ENCODE measurements at regions of chr7 and their contacts with region 1.

Region 1: GRCh38 chr7:1503816-1504775 is at the start of gene INTS1:
- DNase-seq: peak; percentile 82 to 93 (median 88)
- ATAC-seq: peak; percentile 96
- H3K4me3 ChIP-seq: peak within 1 kb of the TSS; percentile 77
- H3K4me3 Mint-ChIP-seq: peak within 1 kb of the TSS; percentile 80 to 94 (median 87)
- H3K27ac ChIP-seq: peak within 1 kb of the TSS; percentile 77
- H3K27ac Mint-ChIP-seq: peak within 1 kb of the TSS in 8 of 9 donors; percentile 59 to 88 (median 77)
- H3K4me1 ChIP-seq: peaks cover 18 to 35% of the 10 kb centered on the region in 2 donors
- H3K4me1 Mint-ChIP-seq: peaks cover 35 to 60% (median 42%) of the 10 kb centered on the region in 7 donors
- H3K27me3 ChIP-seq: no peaks in the 10 kb centered on the region
- H3K27me3 Mint-ChIP-seq: peaks cover 0 to 4% (median 0%) of the 10 kb centered on the region in 5 donors
- total RNA-seq, gene INTS1: 82.0 to 157 (median 111) TPM

Region 2: DNA sequence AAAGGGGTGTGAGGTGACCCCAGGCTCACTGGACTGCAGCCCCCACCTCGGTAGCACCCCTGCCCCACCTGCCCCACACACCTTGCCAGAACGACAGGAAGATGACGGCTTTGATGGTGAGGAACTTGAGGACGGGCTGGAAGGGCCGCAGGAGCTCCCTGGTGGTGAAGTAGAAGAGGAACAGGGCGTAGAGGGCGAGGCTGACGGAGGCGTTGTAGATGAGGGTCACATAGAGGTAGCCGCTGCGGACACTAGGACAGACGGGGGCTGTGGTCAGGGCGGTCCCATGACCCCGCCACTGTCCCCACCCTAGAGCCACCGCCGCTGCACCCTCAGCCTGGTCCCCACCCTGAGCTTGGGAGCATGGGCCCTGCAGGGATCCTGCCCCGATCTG is 44.3 kb after region 1 on chr7:
- CTCF ChIA-PET with region 1: no interaction called
- POLR2A ChIA-PET with region 1: no interaction called
- intact Hi-C with region 1: loop called in 1 of 2 experiments (anchors 1 kb)
- DNase-seq: no peak
- ATAC-seq: peak; percentile 26
- H3K4me3 ChIP-seq: no peak overlapping the region
- H3K4me3 Mint-ChIP-seq: no peak overlapping the region
- H3K27ac ChIP-seq: no peak overlapping the region
- H3K27ac Mint-ChIP-seq: peak overlapping the region in 2 of 9 donors; percentile 38 to 47
- H3K4me1 ChIP-seq: no peaks in the 10 kb centered on the region
- H3K4me1 Mint-ChIP-seq: peaks cover 0 to 8% (median 4%) of the 10 kb centered on the region in 7 donors
- H3K27me3 ChIP-seq: no peaks in the 10 kb centered on the region
- H3K27me3 Mint-ChIP-seq: no peaks in the 10 kb centered on the region

Region 3: DNA sequence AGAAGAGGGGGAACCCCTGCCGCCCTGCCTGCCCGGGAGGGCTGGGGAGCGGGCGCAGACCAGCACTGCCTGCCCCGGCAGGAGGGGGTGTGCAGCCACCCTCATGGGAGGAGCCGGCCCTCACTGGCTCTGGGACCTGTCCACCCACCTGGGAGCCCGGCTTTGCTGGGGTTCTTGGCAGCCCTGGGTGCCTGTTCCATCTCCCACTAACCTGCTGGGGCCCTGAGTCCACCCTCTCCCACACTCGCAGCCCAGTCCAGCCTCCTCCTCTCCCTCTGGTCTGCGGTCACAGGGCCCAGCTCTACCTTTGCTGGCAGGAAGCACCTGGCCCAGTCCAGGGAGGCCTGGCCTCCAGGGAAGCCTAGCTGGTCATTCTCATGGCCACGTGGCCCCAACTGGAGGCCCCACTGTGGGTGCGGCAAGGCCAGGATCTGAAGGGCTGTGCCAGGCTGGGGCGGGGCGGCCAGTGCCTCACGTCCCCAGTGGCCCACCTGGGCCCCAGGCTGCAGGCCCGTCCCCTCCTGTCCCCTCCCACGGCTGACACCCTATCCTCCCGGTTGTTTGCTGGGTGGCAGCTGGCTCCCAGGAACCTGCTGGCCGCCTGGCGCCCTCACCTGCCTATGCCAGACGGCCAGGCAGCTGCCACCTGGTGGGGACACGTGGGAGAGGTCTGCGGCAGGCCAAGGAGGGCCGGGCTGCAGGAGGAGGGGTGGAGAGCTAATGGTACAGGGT is 51.9 kb after region 1 on chr7 and contains the start of gene TMEM184A:
- CTCF ChIA-PET with region 1: interaction called, 8 read pairs
- POLR2A ChIA-PET with region 1: no interaction called
- intact Hi-C with region 1: loop called in 1 of 2 experiments (anchors 1 kb)
- DNase-seq: peak in 7 of 9 donors; percentile 48 to 67 (median 57)
- ATAC-seq: peak; percentile 70
- H3K4me3 ChIP-seq: no peak within 1 kb of the TSS
- H3K4me3 Mint-ChIP-seq: peak within 1 kb of the TSS in 1 of 10 donors; percentile 34
- H3K27ac ChIP-seq: no peak within 1 kb of the TSS
- H3K27ac Mint-ChIP-seq: peak within 1 kb of the TSS in 1 of 9 donors; percentile 56
- H3K4me1 ChIP-seq: no peaks in the 10 kb centered on the region
- H3K4me1 Mint-ChIP-seq: peaks cover 0 to 4% (median 0%) of the 10 kb centered on the region in 7 donors
- H3K27me3 ChIP-seq: no peaks in the 10 kb centered on the region
- H3K27me3 Mint-ChIP-seq: no peaks in the 10 kb centered on the region
- total RNA-seq, gene TMEM184A: 0.05 TPM in 1 of 5 experiments, not detected in the others

Region 4: DNA sequence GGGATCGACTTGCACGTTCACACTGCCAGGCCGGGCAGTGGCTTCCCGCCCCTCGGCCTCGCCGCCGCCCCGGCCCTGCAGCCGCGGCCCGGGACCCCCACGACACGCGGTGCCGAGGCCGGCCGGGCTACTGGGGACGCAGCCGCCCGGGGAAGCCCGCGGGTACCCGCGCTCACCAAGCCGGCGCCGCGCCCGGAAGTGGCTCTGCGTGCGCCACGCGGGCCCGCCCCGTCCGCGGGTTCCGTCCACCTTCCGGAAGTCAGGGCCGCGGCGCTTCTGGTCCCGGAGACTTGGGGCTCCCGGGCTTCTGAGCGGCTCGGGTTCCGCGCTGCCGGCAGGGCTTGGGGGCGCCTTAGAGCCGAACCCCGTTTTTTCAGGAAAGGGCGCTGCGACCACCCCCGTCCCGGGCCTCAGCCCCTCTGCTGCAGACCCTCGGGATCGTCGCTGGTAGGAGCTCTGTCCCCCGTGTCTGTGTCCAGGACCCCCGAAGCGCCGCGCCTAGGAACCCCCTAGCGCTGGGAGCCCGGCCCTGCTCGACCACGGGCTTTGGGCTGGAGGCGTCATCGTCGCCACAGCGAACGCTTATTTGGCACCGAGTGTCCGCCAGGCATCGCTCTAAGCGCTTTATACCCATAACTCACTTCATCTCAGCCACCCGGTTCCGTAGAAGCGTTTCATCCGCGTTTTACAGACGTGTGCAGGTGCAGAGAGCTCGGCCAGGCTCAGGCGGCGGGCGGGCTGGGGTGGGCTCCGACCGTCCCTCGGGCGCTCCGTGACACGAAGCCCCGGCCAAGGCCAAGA is 65.9 kb after region 1 on chr7 and contains the start of gene PSMG3:
- CTCF ChIA-PET with region 1: interaction called, 3 read pairs
- POLR2A ChIA-PET with region 1: interaction called, 9 read pairs
- intact Hi-C with region 1: loop called (anchors 1 kb)
- DNase-seq: peak; percentile 72 to 91 (median 84)
- ATAC-seq: peak; percentile 94
- H3K4me3 ChIP-seq: peak within 1 kb of the TSS; percentile 90
- H3K4me3 Mint-ChIP-seq: peak within 1 kb of the TSS; percentile 77 to 91 (median 86)
- H3K27ac ChIP-seq: peak within 1 kb of the TSS; percentile 95
- H3K27ac Mint-ChIP-seq: peak within 1 kb of the TSS; percentile 81 to 93 (median 88)
- H3K4me1 ChIP-seq: peaks cover 3 to 16% of the 10 kb centered on the region in 2 donors
- H3K4me1 Mint-ChIP-seq: peaks cover 14 to 36% (median 26%) of the 10 kb centered on the region in 7 donors
- H3K27me3 ChIP-seq: no peaks in the 10 kb centered on the region
- H3K27me3 Mint-ChIP-seq: no peaks in the 10 kb centered on the region
- total RNA-seq, gene PSMG3: 12.1 to 31.8 (median 23.2) TPM